ENCODE measurements at regions of chr6 and their contacts with region 1.

Region 1: DNA sequence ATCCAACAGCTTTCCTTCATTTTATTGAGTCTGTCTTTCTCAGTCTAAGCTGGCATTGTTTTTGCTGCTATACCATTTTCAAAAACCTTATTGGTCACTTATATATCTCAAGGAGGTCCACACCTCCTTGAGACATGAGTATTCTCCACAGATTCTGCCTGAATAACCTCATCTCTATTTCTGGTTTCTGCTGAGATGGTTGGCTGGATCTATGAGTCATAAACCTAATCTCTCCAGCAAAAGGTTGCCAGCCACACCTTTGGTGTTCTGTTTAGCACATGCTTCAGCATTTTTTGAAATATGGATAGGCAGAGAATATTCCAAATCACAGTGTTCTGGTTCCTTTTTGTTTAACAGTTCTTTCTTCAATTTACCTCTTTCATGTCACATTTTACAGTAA is 40.8 kb upstream of the TMEM244 start:
- DNase-seq: no peak
- H3K4me3 ChIP-seq: no peak overlapping the region
- H3K27ac ChIP-seq: no peak overlapping the region
- H3K4me1 ChIP-seq: no peaks in the 10 kb centered on the region
- H3K27me3 ChIP-seq: no peaks in the 10 kb centered on the region
- CTCF ChIP-seq: no peak
- EP300 ChIP-seq: no peak
- POLR2A ChIP-seq: no peak

Region 2: DNA sequence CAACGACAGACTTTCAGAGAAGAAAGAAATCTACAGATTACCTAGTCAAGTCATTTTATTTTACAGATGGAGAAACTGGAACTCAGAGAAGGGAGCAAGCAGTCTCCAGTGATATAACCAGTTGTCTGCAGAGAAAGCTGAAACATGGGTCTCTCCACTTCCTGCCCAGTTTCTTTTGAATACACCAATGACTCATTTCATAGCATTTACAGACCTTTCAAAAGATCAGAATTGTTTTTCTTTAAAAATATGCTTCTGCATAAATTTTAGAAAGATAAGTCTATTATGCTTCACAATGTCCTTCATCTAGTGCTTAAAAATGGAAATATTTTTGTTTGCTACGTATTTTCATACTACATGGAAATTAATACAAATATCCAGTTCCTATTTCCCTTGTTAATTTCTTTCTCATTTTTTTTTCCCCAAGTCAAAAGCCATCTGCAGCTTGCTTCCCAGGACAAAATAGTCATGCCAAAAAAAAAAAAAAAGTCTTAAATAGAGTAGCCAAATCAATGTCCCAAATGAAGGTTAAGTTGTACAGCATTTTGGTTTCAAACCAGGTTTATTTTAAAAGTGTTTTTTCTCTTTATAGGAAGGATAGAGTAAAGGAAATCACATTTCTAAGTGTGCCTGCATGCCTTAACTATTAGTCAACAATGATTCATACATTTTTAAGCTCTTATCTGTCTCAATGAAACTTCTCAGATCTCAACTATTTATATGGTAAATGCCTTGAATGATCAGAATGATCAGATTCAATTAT is 228.8 kb before region 1 on chr6:
- intact Hi-C with region 1: no loop called
- DNase-seq: no peak
- H3K4me3 ChIP-seq: no peak overlapping the region
- H3K27ac ChIP-seq: peak overlapping the region in 1 of 2 donors; percentile 39
- H3K4me1 ChIP-seq: peaks cover 2% of the 10 kb centered on the region
- H3K27me3 ChIP-seq: no peaks in the 10 kb centered on the region
- CTCF ChIP-seq: no peak
- EP300 ChIP-seq: no peak
- POLR2A ChIP-seq: no peak

Region 3: DNA sequence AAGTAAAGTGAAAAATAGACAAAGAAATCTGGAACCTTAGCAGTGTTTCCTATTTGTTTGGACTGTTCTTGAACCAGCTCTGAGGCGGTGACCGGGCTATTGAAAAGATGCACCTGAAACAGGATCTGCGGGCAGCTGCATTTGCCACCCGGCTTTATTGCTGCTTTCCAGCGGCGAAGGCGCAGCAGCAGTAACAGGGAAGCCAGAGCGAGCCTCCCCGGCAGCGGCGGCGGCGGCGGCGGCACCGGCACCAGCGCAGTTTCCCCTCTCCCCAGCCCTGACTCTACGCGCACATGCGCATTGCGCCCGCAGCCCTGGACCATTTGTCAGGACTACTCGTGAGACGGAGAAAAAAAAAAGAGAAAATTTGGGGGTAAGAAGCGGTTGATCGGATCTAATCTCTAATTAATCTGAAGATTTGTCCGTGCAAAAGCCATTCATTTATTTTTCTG is 116.4 kb after region 1 on chr6 and contains the start of gene L3MBTL3:
- intact Hi-C with region 1: loop called in 1 of 4 experiments (anchors 10 kb)
- DNase-seq: peak; percentile 84 to 91 (median 88)
- H3K4me3 ChIP-seq: peak within 1 kb of the TSS; percentile 71
- H3K27ac ChIP-seq: peak within 1 kb of the TSS; percentile 81 to 85
- H3K4me1 ChIP-seq: no peaks in the 10 kb centered on the region
- H3K27me3 ChIP-seq: no peaks in the 10 kb centered on the region
- CTCF ChIP-seq: no peak
- EP300 ChIP-seq: no peak
- POLR2A ChIP-seq: no peak
- total RNA-seq, gene L3MBTL3: 6.5 to 17.9 (median 14.1) TPM

Region 4: DNA sequence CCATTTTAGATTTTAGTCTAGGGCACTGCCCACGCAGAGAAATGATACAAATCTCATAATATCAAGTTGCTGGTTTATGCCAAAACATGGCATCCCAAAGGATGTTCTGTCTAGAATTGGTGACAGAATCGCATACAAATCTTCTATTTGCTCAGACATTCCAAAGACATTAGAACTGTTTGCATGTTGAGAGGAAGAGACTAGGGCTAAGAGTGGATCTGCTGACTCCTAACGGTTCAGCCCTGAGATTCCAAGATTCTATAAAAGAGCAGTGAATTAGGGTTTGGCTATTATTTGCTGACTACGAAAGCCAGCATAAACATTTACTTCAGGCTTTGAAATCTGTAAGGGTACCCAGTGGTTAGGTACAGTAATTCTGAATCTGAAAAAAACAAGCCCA is 1157.6 kb after region 1 on chr6:
- intact Hi-C with region 1: no loop called
- DNase-seq: no peak
- H3K4me3 ChIP-seq: no peak overlapping the region
- H3K27ac ChIP-seq: no peak overlapping the region
- H3K4me1 ChIP-seq: peaks cover 3% of the 10 kb centered on the region
- H3K27me3 ChIP-seq: no peaks in the 10 kb centered on the region
- CTCF ChIP-seq: no peak
- EP300 ChIP-seq: no peak
- POLR2A ChIP-seq: no peak